ENCODE measurements at regions of chr17 and their contacts with region 1.

Region 1: DNA sequence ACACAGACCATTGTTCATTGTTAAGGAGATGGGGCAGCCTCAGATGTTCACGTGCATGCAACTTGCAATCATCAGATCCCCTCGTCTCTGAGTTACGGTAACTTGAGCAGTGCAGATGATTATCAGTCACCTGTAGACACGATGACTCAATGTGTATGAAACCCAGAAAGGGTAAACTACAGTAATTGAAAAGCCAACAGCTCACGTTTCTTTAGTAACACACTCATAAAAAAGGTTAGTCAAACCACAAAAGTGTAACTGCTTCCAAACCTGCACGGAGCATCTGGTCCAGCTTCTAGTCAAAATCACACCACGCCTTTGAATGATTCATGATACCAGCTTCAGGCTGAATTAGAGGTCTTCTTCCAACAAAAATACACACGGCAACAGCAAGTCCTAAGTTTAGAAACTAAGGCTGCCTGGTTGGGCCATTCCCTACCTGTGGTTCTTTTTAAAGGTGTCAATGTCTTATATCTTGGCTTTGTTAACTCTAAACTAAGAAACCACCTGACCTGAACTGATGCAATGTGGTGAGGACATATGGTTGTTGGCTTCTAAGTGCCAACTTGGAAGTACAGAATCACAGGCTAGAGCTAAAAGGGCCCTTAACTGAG is 32.3 kb downstream of the GRB7 start:
- DNase-seq: peak; percentile 100
- H3K4me3 Mint-ChIP-seq: peak overlapping the region; percentile 10
- H3K27ac Mint-ChIP-seq: peak overlapping the region; percentile 60
- H3K4me1 Mint-ChIP-seq: peaks cover 72% of the 10 kb centered on the region
- H3K27me3 Mint-ChIP-seq: peaks cover 13% of the 10 kb centered on the region
- CTCF ChIP-seq: no peak

Region 2: GRCh38 chr17:39563476-39563875 is 206.6 kb before region 1 on chr17:
- CTCF ChIA-PET with region 1: no interaction called
- intact Hi-C with region 1: no loop called
- DNase-seq: no peak
- H3K4me3 Mint-ChIP-seq: no peak overlapping the region
- H3K27ac Mint-ChIP-seq: no peak overlapping the region
- H3K4me1 Mint-ChIP-seq: no peaks in the 10 kb centered on the region
- H3K27me3 Mint-ChIP-seq: no peaks in the 10 kb centered on the region
- CTCF ChIP-seq: no peak

Region 3: GRCh38 chr17:39704821-39705551 is 65.1 kb before region 1 on chr17:
- CTCF ChIA-PET with region 1: interaction called, 34,714 read pairs
- intact Hi-C with region 1: loop called (anchors 1 kb)
- DNase-seq: peak; percentile 99
- H3K4me3 Mint-ChIP-seq: peak overlapping the region; percentile 71
- H3K27ac Mint-ChIP-seq: peak overlapping the region; percentile 67
- H3K4me1 Mint-ChIP-seq: peaks cover 92% of the 10 kb centered on the region
- H3K27me3 Mint-ChIP-seq: no peaks in the 10 kb centered on the region
- CTCF ChIP-seq: no peak

Region 4: GRCh38 chr17:39808409-39808997 is 38.4 kb after region 1 on chr17:
- CTCF ChIA-PET with region 1: interaction called, 881 read pairs
- intact Hi-C with region 1: loop called (anchors 1 kb)
- DNase-seq: peak; percentile 98
- H3K4me3 Mint-ChIP-seq: peak overlapping the region; percentile 1
- H3K27ac Mint-ChIP-seq: peak overlapping the region; percentile 16
- H3K4me1 Mint-ChIP-seq: peaks cover 37% of the 10 kb centered on the region
- H3K27me3 Mint-ChIP-seq: no peaks in the 10 kb centered on the region
- CTCF ChIP-seq: no peak

Region 5: DNA sequence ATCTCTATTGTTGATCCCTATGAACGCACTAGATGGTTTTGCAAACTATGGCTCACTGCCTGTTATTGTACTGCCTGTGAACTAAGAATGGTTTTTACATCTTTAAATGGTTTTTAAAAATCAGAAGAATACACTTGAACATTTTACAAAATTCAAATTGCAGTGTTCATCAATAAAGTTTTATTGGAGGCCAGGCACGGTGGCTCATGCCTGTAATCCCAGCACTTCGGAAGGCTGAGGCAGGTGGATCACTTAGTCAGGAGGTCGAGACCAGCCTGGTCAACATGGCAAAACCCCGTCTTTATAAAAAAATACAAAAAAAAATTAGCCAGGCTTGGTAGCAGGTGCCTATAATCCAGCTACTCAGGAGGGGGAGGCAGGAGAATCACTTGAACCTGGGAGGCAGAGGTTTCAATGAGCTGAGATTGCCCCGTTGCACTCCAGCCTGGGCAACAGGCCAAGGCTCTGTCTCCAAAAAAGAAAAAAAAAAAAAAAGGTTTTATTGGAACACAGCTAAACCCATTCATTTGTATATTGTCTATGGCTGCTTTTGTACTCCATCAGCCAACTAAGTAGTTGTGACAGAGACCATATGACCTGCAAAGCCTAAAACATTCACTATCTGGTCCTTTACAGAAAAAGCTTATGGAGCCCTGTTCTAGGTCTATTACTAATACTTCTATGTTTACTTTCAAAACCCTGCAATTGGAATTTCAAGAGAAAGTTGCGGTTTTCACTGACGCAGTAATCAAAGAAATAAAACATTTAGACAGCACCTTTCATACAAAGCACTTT is 75.2 kb after region 1 on chr17:
- CTCF ChIA-PET with region 1: interaction called, 543 read pairs
- intact Hi-C with region 1: no loop called
- DNase-seq: peak; percentile 81
- H3K4me3 Mint-ChIP-seq: no peak overlapping the region
- H3K27ac Mint-ChIP-seq: no peak overlapping the region
- H3K4me1 Mint-ChIP-seq: peaks cover 10% of the 10 kb centered on the region
- H3K27me3 Mint-ChIP-seq: no peaks in the 10 kb centered on the region
- CTCF ChIP-seq: no peak

Region 6: GRCh38 chr17:39903158-39903884 is 133.2 kb after region 1 on chr17:
- CTCF ChIA-PET with region 1: interaction called, 1,212 read pairs
- intact Hi-C with region 1: no loop called
- DNase-seq: peak; percentile 66
- H3K4me3 Mint-ChIP-seq: no peak overlapping the region
- H3K27ac Mint-ChIP-seq: no peak overlapping the region
- H3K4me1 Mint-ChIP-seq: peaks cover 12% of the 10 kb centered on the region
- H3K27me3 Mint-ChIP-seq: no peaks in the 10 kb centered on the region
- CTCF ChIP-seq: no peak

Region 7: GRCh38 chr17:39939588-39940419 is 169.7 kb after region 1 on chr17:
- CTCF ChIA-PET with region 1: interaction called, 1,070 read pairs
- intact Hi-C with region 1: no loop called
- DNase-seq: peak; percentile 76
- H3K4me3 Mint-ChIP-seq: no peak overlapping the region
- H3K27ac Mint-ChIP-seq: no peak overlapping the region
- H3K4me1 Mint-ChIP-seq: peaks cover 12% of the 10 kb centered on the region
- H3K27me3 Mint-ChIP-seq: peaks cover 63% of the 10 kb centered on the region
- CTCF ChIP-seq: no peak

Region 8: DNA sequence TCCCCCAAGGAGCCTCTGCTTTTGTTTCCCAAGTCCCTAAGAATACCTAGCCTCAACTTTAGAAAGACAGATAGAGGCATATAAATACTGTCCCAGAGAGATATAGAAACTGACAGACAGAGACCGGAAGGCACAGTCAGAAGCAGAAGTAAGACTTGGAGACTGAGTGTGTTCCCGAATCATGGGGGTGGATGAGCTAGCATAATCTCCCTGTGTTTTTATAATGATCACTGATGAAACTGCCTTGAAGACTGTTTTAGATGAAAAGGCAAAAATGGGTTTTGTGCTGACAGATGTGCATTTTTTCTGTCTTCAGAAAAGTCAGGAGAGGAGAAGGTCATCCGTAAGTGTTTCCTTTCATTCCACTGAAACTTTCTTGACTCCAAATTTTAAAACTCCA is 202.2 kb after region 1 on chr17:
- CTCF ChIA-PET with region 1: interaction called, 1,070 read pairs
- intact Hi-C with region 1: no loop called
- DNase-seq: no peak
- H3K4me3 Mint-ChIP-seq: no peak overlapping the region
- H3K27ac Mint-ChIP-seq: no peak overlapping the region
- H3K4me1 Mint-ChIP-seq: peaks cover 17% of the 10 kb centered on the region
- H3K27me3 Mint-ChIP-seq: peaks cover 84% of the 10 kb centered on the region
- CTCF ChIP-seq: no peak

Measured in Calu3 (cell line).